Activated CD8-positive, alpha-beta T cell treated with anti-CD3 and anti-CD28 coated beads, Interleukin-2, amount 10 ng/mL, durations not matched to agents 7 days and 5 days (primary cell): ENCODE measurements at regions of chr7 and their contacts with region 1.

Region 1: DNA sequence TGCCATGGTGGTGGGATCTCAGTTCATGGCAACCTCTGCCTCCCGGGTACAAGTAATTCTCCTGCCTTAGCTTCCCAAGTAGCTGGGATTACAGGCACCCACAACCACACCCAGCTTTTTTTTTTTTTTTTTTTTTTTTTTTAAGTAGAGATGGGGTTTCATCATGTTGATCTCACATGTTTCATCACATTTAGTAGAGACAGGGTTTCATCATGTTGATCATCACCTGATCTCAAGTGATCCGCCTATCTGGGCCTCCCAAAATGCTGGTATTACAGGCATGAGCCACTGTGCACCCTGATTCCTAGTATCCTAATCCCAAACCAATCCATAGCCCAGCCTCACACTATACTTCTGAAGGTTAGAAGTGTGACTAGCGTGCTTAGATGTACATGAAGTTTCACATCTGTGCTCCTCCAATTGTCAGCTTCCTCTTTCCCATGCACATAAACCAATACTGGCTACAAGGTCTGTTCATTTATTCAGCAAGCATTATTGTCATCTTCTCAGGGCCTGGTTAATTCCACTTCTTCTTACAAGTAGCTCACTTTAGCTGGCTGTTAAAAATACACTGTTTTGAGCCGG is 6.8 kb upstream of the NAT16 start:
- DNase-seq: no peak
- ATAC-seq: no peak
- H3K4me3 Mint-ChIP-seq: no peak overlapping the region
- H3K27ac Mint-ChIP-seq: no peak overlapping the region
- H3K4me1 Mint-ChIP-seq: no peaks in the 10 kb centered on the region
- H3K27me3 Mint-ChIP-seq: peaks cover 19% of the 10 kb centered on the region

Region 2: GRCh38 chr7:101017064-101017777 is 169.7 kb before region 1 on chr7:
- CTCF ChIA-PET with region 1: no interaction called
- POLR2A ChIA-PET with region 1: no interaction called
- DNase-seq: peak; percentile 87
- ATAC-seq: peak; percentile 96
- H3K4me3 Mint-ChIP-seq: peak overlapping the region; percentile 87
- H3K27ac Mint-ChIP-seq: peak overlapping the region; percentile 91
- H3K4me1 Mint-ChIP-seq: peaks cover 25% of the 10 kb centered on the region
- H3K27me3 Mint-ChIP-seq: no peaks in the 10 kb centered on the region

Region 3: DNA sequence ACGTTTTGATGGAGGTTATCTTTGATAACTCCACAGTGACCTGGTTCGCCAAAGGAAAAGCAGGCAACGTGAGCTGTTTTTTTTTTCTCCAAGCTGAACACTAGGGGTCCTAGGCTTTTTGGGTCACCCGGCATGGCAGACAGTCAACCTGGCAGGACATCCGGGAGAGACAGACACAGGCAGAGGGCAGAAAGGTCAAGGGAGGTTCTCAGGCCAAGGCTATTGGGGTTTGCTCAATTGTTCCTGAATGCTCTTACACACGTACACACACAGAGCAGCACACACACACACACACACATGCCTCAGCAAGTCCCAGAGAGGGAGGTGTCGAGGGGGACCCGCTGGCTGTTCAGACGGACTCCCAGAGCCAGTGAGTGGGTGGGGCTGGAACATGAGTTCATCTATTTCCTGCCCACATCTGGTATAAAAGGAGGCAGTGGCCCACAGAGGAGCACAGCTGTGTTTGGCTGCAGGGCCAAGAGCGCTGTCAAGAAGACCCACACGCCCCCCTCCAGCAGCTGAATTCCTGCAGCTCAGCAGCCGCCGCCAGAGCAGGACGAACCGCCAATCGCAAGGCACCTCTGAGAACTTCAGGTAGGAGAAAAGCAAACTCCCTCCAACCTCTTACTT is 60.2 kb before region 1 on chr7 and contains the start of gene SERPINE1:
- CTCF ChIA-PET with region 1: interaction called, 11 read pairs
- POLR2A ChIA-PET with region 1: no interaction called
- DNase-seq: peak; percentile 88
- ATAC-seq: peak; percentile 81
- H3K4me3 Mint-ChIP-seq: peak within 1 kb of the TSS; percentile 56
- H3K27ac Mint-ChIP-seq: peak within 1 kb of the TSS; percentile 79
- H3K4me1 Mint-ChIP-seq: peaks cover 60% of the 10 kb centered on the region
- H3K27me3 Mint-ChIP-seq: peaks cover 22% of the 10 kb centered on the region
- total RNA-seq, gene SERPINE1: 0.47 to 0.58 TPM

Region 4: DNA sequence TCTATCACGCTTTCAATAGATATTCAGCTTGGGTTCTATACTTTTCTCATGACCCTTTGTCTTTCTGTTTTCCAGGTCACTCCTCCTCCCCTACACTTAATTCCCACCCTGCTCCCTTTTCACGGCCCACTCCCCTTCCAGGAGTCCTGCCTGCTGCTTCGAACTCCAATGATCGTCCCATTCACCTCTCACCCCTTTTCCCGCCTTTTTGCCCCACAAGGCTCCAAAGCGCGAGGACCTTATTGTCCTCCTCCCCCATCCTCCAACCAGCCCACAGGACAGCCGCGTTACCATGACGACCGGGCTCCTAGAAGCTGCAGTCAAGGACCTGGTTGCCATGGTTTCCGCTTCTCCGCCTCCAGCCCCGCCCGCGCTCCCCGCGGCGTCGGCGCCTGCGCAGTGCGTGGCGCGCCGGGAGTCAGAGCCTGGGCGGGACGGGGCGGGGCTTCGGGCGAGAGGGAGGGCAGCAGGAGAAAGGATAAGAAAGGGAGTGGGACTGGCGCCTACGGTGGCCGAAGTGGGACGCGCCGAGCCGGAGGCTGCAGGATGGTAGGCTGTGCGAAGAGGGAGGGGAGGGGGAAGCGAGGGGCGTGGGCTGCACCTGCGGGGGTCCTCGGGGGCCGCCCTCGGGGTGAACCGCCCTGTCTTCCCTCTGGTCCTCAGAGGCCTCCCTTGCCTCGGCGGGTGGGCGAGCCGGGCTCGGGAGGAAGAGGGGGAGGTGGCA is 32.8 kb before region 1 on chr7 and contains the start of gene AP1S1:
- CTCF ChIA-PET with region 1: interaction called, 232 read pairs
- POLR2A ChIA-PET with region 1: no interaction called
- DNase-seq: peak; percentile 96
- ATAC-seq: peak; percentile 86
- H3K4me3 Mint-ChIP-seq: peak within 1 kb of the TSS; percentile 80
- H3K27ac Mint-ChIP-seq: peak within 1 kb of the TSS; percentile 76
- H3K4me1 Mint-ChIP-seq: peaks cover 14% of the 10 kb centered on the region
- H3K27me3 Mint-ChIP-seq: peaks cover 17% of the 10 kb centered on the region
- total RNA-seq, gene AP1S1: 46.2 to 48.9 TPM

Region 5: DNA sequence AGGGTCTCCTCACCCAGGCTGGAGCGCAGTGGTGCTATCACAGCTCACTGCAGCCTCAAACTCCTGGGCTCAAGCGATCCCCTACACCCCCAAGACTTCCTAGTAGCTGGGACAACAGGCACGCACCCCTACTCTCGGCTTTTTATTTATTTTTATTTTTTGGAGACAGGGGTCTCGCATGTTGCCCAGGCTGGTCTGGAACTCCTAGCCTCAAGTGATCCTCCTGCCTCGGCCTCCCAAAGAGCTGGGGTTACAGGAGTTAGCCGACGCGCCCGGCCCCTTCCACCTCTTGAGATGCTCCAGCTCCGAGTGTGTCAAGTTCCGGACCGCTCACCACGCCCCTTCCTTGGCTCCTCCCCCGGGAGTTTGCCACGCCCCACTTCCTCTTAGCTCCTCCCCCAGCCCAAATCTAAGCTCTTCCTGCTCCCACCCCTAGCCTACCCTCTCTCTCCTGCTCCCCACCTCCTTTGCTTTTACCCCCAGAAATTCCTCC is 13.1 kb before region 1 on chr7:
- CTCF ChIA-PET with region 1: interaction called, 19 read pairs
- POLR2A ChIA-PET with region 1: no interaction called
- DNase-seq: peak; percentile 81
- ATAC-seq: peak; percentile 65
- H3K4me3 Mint-ChIP-seq: peak overlapping the region; percentile 49
- H3K27ac Mint-ChIP-seq: no peak overlapping the region
- H3K4me1 Mint-ChIP-seq: peaks cover 49% of the 10 kb centered on the region
- H3K27me3 Mint-ChIP-seq: peaks cover 82% of the 10 kb centered on the region

Region 6: DNA sequence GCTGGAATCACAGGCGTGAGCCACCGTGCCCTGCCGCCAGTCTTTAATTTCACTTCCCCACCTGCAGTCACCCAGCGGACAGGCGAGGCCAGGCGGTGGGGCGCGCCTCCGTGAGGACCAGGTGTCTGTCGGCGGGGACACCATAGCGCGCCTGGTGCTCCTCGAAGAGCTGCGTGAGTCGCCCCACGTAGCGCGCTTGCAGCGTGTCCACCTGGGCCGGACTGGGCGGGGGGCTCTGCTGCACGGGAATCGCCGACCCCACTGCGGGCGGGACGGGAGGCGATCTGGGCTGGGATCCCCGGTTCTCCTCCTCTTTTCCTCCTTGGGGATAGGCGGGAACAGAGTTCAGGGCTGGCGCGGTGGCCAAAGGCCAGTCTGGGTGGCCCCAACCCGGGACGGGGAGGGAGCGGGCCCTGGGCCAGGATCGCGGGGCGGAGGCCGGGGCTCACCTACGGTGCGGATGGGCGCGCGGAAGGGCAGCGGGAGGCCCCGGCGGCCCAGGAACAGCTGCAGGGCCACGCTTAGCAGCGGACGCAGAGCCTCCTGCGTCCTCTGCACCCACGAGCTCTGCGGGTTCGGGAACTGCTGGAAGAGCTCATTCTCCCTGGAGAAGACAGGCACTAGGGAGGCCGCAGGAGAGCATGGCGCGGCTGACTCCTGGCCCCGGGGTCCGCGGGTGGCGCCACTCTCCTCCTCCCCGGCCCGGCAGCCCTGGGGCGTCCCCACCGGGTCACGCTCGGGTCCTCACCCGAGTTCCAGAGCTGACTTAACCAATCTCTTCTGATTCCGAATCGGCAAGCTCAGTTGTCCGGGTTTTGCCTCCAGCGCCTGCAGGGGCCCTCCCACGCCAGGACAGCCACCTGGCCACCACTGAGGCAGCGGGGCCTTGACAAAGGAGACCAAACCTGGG is 15.0 kb after region 1 on chr7:
- CTCF ChIA-PET with region 1: interaction called, 21 read pairs
- POLR2A ChIA-PET with region 1: no interaction called
- DNase-seq: no peak
- ATAC-seq: peak; percentile 35
- H3K4me3 Mint-ChIP-seq: no peak overlapping the region
- H3K27ac Mint-ChIP-seq: no peak overlapping the region
- H3K4me1 Mint-ChIP-seq: peaks cover 10% of the 10 kb centered on the region
- H3K27me3 Mint-ChIP-seq: peaks cover 32% of the 10 kb centered on the region

Region 7: DNA sequence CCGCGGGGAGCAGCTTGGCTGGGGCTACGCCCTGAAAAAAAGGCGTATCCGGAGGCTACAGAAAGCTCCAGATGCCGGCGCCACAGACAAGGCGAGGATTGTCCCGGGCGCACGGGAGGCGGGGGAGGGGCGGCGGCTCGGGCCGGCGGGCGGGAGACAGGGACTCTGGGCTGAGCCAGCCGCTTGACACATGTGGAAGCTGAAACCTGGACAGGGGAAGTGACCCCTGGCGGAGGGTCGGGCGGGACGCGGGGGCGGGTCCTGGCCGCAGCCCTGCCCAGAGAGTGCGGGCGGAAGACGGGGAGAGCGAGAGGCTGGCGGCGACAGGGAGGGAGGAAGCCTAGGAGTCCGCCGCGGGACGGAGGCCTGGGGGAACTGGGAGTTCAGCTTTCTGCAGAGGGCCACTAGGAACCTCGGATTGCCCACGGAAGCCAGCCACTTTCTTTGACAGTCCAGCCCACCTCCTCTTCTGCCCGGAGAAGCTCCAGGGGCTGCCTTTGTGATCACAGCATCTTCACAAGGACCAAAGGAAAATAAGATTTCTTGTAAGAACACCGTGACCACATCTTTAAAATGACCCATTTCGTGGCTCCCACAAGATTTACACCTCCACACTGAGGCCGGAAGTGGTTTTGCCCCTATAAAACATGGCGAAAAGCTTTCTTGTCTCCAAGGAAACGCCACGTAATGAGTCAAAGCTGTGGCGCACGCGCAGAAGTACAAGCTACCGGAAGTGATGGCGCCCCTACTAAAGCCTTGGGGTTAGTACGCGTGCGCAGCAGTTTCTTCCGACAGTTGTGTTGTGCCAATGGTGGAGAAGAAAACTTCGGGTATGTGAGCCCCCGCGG is 30.7 kb after region 1 on chr7 and contains the starts of genes PLOD3 and ZNHIT1:
- CTCF ChIA-PET with region 1: interaction called, 36 read pairs
- POLR2A ChIA-PET with region 1: no interaction called
- DNase-seq: peak; percentile 99
- ATAC-seq: peak; percentile 71
- H3K4me3 Mint-ChIP-seq: peak within 1 kb of the TSS; percentile 96
- H3K27ac Mint-ChIP-seq: peak within 1 kb of the TSS; percentile 88
- H3K4me1 Mint-ChIP-seq: peaks cover 36% of the 10 kb centered on the region
- H3K27me3 Mint-ChIP-seq: no peaks in the 10 kb centered on the region
- total RNA-seq, gene PLOD3: 51.1 to 58.1 TPM
- total RNA-seq, gene ZNHIT1: 56.1 to 58.4 TPM

Region 8: GRCh38 chr7:101287032-101287431 is 100.1 kb after region 1 on chr7:
- CTCF ChIA-PET with region 1: interaction called, 33 read pairs
- POLR2A ChIA-PET with region 1: no interaction called
- DNase-seq: no peak
- ATAC-seq: no peak
- H3K4me3 Mint-ChIP-seq: no peak overlapping the region
- H3K27ac Mint-ChIP-seq: no peak overlapping the region
- H3K4me1 Mint-ChIP-seq: peaks cover 24% of the 10 kb centered on the region
- H3K27me3 Mint-ChIP-seq: peaks cover 7% of the 10 kb centered on the region